Dorsolateral prefrontal cortex (tissue), 120 donors: ENCODE measurements at regions of chr9 and their contacts with region 1.

Region 1: GRCh38 chr9:124852829-124853531 is at the start of gene WDR38:
- DNase-seq: peak in 7 of 10 donors; percentile 48 to 87 (median 60)
- H3K4me3 ChIP-seq: peak within 1 kb of the TSS; percentile 7 to 70 (median 53)
- H3K27ac ChIP-seq: peak within 1 kb of the TSS in 50 of 59 donors; percentile 8 to 83 (median 60)
- H3K27me3 ChIP-seq: no peaks in the 10 kb centered on the region
- CTCF ChIP-seq: peak; percentile 87 to 100 (median 98)
- total RNA-seq, gene WDR38: 0.36 to 1.2 (median 0.64) TPM in 21 of 120 experiments, not detected in the others

Region 2: DNA sequence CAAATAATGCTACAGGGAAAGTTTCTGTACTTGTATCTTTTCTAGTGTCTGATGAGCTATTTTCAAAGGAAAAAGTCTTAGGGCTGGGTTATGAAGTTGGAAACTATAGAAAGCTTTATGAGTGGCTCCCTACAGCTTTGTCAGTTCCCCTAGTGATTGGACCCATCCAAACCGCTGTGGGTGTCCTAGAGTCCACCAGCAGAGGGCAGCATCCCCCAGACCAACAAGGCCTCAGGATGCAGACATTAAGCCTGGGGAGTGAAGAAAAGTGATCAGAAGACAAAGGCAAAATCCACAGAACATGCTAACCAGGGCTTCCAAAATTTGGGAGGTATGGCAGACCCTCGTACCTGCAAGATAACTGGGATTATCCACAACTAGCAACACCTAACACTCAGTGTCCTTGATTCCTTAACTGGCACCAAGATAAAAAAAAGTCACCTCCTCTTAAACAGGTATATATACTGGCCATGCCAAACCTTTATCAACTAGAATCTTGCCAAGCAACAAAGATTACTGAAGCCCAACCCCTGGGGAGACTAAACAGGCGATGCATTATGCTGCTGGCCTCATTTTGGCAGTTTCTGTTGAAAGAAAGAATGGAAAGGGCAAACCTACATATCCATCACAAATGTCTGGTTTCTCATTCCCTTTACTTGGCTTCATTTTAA is 235.4 kb before region 1 on chr9:
- intact Hi-C with region 1: loop called in 1 of 2 experiments (anchors 5 kb)
- DNase-seq: peak; percentile 66 to 89 (median 85)
- H3K4me3 ChIP-seq: no peak overlapping the region
- H3K27ac ChIP-seq: no peak overlapping the region
- H3K27me3 ChIP-seq: no peaks in the 10 kb centered on the region
- CTCF ChIP-seq: peak; percentile 54 to 98 (median 94)

Region 3: GRCh38 chr9:124894741-124895170 is 41.8 kb after region 1 on chr9:
- intact Hi-C with region 1: loop called in 1 of 2 experiments (anchors 5 kb)
- DNase-seq: peak in 1 of 10 donors; percentile 53
- H3K4me3 ChIP-seq: peak overlapping the region in 1 of 59 donors; percentile 6
- H3K27ac ChIP-seq: peak overlapping the region in 58 of 59 donors; percentile 1 to 90 (median 78)
- H3K27me3 ChIP-seq: no peaks in the 10 kb centered on the region
- CTCF ChIP-seq: peak in 55 of 56 donors; percentile 38 to 71 (median 55)

Region 4: GRCh38 chr9:125436458-125437443 is 583.8 kb after region 1 on chr9:
- intact Hi-C with region 1: no loop called
- DNase-seq: peak in 1 of 10 donors; percentile 17
- H3K4me3 ChIP-seq: no peak overlapping the region
- H3K27ac ChIP-seq: no peak overlapping the region
- H3K27me3 ChIP-seq: no peaks in the 10 kb centered on the region
- CTCF ChIP-seq: no peak